Right ventricle myocardium inferior (tissue), 1 donor: ENCODE measurements at regions of chr5 and their contacts with region 1.

Region 1: DNA sequence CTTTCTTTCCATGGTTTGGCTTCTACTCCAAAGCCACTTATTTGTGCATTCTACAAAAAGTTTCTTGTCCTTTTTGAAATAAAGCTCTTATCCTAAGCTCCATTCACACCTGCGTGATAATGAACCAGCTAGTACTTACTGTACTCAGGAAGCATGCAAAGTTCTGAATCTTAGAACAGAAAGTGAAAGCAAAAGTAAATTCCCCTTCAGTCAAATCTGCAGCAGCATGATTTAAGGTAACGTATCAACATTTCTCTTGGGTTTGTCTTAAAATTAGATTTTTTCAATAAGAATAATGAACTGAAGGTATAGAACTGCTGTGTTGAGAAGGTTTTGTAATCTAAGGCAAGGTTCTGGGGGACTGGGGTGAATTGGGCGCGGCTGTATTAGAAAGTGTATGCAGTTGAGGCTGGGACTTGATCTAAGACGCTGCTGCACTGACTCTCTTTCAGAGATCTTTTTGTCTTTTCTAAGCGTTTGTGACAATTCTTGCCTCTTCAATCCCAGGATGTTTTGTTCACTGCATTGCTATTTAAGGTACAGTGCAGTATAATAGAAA is at the start of gene ERAP2:
- DNase-seq: no peak
- ATAC-seq: peak; percentile 57
- total RNA-seq, gene ERAP2: 6.4 TPM

Region 2: DNA sequence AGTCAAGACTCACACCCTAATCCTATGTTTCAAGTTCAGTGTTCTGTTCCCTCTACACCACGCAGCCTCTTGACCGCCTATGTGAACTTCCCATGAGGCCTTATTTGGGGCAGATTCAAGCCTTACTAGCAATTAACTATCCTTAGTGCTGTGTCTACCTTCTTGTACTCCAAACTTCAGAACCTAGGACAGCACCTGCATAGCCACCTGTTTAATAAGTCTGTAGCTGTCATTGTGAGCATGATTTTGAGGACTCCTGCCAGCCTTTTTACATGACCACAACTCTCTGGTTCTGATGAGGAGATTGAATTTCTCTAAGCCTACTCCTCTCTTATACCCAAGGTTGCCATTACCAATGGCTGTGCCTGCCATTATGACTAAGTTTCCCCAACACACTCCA is 392.5 kb before region 1 on chr5:
- intact Hi-C with region 1: no loop called
- DNase-seq: no peak
- ATAC-seq: no peak

Region 3: GRCh38 chr5:96919754-96920197 is 43.4 kb after region 1 on chr5:
- intact Hi-C with region 1: no loop called
- DNase-seq: no peak
- ATAC-seq: no peak

Region 4: DNA sequence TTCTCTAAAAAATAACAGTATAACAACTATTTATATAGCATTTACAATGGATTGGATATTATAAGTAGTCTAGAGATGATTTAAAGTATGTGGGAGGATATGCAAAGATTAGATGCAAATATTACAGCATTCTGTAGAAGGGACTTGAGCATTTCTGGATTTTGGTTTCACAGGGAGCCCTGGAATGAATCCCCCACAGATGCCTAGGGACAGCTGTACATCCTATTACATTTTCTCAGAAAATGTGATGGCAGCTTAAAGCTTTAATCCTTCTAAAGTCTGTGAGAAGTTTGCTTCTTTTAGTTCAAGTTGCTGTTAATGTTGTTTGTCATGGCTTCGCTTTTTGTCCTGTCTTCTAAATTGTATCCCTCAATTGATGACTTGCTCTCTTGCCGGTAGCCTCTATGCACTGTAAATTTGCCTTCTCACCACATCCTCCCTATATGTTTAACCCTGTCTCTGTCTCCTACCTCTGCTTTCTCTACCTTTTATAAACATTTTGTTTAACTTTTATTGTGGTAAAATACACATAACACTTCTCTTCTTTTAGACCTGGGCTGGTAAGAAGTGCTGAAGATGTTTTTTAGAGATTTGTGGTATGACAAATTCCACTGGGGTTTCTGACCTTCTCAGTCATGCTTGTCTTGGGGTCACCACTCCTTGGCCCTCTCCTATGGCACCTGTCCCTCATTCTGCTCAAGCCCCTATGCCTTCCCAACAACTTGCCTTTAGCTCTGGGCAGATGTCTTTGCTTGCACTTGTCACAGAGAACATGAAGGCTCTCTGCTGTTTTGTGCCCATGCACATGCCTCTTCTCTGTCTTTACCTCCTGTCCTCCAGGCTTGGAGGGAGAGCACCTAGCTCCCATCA is 97.4 kb after region 1 on chr5:
- intact Hi-C with region 1: no loop called
- DNase-seq: no peak
- ATAC-seq: no peak

Region 5: DNA sequence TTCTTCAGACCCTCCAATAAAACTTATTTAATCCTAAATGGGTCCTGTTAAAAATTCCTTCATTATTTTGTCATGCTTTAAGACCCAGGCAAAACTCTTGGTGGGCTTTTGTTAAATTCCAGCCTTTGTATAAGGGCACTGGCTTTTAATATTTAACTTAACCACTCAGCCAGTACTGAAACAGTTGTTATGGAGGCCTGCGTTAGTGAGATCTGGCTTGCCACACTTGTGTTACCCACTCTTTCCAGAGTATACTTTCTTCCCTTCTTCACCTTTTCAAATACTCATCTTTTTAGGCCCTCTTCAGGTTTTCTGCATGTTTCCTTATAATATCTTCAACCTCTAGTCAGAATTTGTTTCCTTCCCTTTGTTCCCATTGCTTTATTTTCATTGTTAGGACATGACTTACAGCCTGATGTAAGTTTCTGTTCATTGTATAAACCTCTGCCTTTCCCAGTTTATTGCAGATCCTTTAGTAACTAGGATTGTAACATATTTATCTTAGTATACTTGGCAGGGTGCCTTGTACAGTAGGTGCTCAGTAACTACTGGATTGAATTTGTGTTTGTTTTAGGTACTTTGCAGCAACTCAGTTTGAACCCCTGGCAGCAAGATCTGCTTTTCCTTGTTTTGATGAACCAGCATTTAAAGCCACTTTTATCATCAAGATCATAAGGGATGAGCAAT is 108.3 kb after region 1 on chr5:
- intact Hi-C with region 1: loop called (anchors 10 kb)
- DNase-seq: no peak
- ATAC-seq: no peak

Region 6: DNA sequence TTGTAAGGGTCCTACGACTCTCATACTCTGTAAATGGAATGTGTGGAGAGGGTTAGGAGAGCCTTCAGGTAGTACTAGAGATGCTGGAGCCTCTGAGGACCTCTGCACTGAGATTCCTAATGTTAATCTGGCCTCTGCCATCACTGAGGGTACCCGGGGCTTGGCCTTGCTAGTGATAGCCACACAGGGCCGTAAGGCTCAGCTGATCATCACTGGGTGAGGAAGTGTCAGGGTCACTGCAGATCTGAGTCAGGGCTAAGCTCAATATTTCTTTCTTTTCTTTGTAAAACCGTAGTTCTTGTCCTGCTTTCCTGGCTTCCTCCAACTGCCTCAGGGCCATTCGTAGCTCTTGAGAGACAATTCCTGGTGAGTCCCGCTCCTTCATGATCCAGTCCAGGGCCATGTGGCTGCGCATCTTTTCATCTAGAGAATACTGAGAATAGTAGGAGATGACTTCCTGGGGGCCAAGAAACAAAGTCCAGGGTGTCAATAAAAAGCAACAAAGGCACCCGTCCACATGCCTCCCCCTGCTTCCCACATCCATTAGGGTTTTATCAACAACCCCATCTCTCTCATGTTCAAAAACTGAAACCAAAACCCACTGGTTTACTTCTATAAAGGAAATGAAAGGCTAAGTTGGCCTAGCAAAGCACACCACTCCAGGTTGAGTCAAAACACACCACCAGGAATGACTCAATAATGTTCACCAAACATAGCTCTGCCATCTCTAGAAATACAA is 218.4 kb after region 1 on chr5:
- intact Hi-C with region 1: no loop called
- DNase-seq: peak; percentile 56
- ATAC-seq: no peak